Activated T-helper 1 cell treated with anti-CD3 and anti-CD28 coated beads, Interleukin-12 subunit alpha, Interleukin-12 subunit beta, Interleukin-2, Interleukin-4 antibody, amounts not matched to agents 30 ng/mL and 10 ng/mL and 1 ng/mL, durations not matched to agents 14 hours and 24 hours and 36 hours (primary cell): ENCODE measurements at regions of chr22 and their contacts with region 1.

Region 1: GRCh38 chr22:30423982-30424963 is 1.3 kb upstream of the MTFP1 start:
- DNase-seq: peak; percentile 98
- H3K4me3 Mint-ChIP-seq: peak overlapping the region; percentile 98
- H3K27ac Mint-ChIP-seq: peak overlapping the region; percentile 99
- H3K4me1 Mint-ChIP-seq: peaks cover 66% of the 10 kb centered on the region
- H3K27me3 Mint-ChIP-seq: no peaks in the 10 kb centered on the region

Region 2: DNA sequence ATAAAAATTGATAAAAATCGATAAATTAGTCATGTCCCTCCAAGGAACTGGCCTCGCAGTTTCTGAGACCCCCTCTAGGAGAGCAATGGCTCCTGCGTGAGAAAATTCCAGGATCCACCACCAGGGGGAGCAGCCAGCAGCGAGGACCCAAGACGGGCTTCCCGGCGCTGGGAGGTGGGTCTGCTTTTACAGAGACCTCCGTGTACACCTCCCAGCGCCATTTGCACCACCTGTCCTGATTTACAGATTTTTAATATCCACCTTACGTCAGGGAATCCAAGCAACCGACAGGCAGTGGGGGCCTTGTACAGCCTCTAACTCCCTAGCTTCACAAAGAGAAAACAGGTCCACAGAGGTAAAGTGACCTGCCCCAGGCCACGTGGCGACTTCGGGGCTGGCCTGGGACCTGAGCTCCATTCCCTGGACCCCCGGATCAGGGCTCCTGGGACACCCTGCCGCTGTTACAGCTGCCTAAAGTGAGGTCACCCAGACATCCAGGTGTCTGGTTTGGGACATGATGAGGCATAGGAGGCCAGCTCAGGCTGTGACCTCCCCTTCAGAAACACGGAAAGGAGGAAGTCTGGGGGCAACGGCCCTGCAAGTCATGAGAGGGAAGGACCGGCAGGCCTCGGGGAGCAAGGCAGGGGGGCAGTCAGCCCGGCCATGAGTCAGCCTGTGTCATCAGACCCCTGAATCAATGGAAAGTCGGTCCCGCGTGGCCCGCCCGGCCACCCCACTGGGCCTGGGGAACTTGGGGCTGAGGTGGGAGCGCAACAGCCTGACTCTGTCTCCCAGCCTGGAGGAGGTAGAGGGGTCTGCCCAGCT is 161.1 kb before region 1 on chr22:
- intact Hi-C with region 1: loop called (anchors 1 kb)
- DNase-seq: peak; percentile 67
- H3K4me3 Mint-ChIP-seq: peak overlapping the region; percentile 95
- H3K27ac Mint-ChIP-seq: peak overlapping the region; percentile 94
- H3K4me1 Mint-ChIP-seq: peaks cover 64% of the 10 kb centered on the region
- H3K27me3 Mint-ChIP-seq: no peaks in the 10 kb centered on the region

Region 3: GRCh38 chr22:30326706-30327362 is 97.4 kb before region 1 on chr22 and contains the start of gene TBC1D10A:
- intact Hi-C with region 1: loop called (anchors 2 kb)
- DNase-seq: peak; percentile 90
- H3K4me3 Mint-ChIP-seq: peak within 1 kb of the TSS; percentile 89
- H3K27ac Mint-ChIP-seq: peak within 1 kb of the TSS; percentile 60
- H3K4me1 Mint-ChIP-seq: peaks cover 48% of the 10 kb centered on the region
- H3K27me3 Mint-ChIP-seq: no peaks in the 10 kb centered on the region
- total RNA-seq, gene TBC1D10A: 17.3 and 24.9 TPM in 2 replicates

Region 4: GRCh38 chr22:30386960-30387827 is 37.1 kb before region 1 on chr22 and contains the start of gene RNF215:
- intact Hi-C with region 1: loop called (anchors 1 kb)
- DNase-seq: peak; percentile 79
- H3K4me3 Mint-ChIP-seq: peak within 1 kb of the TSS; percentile 84
- H3K27ac Mint-ChIP-seq: peak within 1 kb of the TSS; percentile 56
- H3K4me1 Mint-ChIP-seq: peaks cover 25% of the 10 kb centered on the region
- H3K27me3 Mint-ChIP-seq: no peaks in the 10 kb centered on the region
- total RNA-seq, gene RNF215: 10.3 and 13.2 TPM in 2 replicates

Region 5: DNA sequence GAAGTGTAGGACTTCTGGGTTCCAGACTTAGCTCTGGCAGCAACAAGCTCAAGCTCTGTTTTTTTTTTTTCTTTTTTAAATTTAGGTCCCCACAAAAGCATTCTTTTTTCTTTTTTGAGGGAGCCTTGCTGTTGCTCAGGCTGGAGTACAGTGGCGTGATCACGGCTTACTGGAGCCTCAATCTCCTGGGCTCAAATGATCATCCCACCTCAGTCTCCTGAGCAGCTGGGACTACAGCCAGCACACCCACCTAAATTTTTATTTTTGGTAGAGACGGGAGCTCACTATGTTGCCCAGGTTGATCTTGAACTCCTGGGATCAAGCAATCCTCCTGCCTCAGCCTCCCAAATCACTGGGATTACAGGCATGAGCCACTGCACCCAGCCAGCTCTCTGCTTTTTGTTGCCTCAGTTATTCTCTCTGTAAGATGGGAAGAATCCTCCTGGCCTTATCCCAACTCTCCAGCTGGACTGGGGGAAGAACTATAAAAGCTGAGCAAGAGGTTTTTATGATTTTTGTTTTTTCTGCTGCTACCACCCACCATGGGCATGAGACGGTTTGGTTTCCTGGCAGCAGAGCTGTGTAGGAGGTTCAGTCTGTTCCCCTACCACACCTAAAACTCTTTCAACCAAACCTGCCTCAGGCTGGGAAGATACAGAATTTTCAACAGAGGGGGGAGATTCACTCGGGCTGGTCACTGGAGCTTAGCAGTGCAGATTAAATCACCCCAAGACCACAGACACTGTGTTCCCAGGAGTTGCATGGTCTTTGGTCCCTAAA is 10.3 kb before region 1 on chr22:
- intact Hi-C with region 1: loop called (anchors 1 kb)
- DNase-seq: no peak
- H3K4me3 Mint-ChIP-seq: peak overlapping the region; percentile 24
- H3K27ac Mint-ChIP-seq: peak overlapping the region; percentile 82
- H3K4me1 Mint-ChIP-seq: peaks cover 49% of the 10 kb centered on the region
- H3K27me3 Mint-ChIP-seq: no peaks in the 10 kb centered on the region

Region 6: GRCh38 chr22:30444632-30445437 is 20.6 kb after region 1 on chr22:
- intact Hi-C with region 1: loop called (anchors 1 kb)
- DNase-seq: peak; percentile 46
- H3K4me3 Mint-ChIP-seq: no peak overlapping the region
- H3K27ac Mint-ChIP-seq: no peak overlapping the region
- H3K4me1 Mint-ChIP-seq: peaks cover 29% of the 10 kb centered on the region
- H3K27me3 Mint-ChIP-seq: peaks cover 27% of the 10 kb centered on the region

Region 7: GRCh38 chr22:30606455-30607299 is 182.4 kb after region 1 on chr22 and contains the start of gene TCN2:
- intact Hi-C with region 1: no loop called
- DNase-seq: peak; percentile 19
- H3K4me3 Mint-ChIP-seq: peak within 1 kb of the TSS; percentile 82
- H3K27ac Mint-ChIP-seq: peak within 1 kb of the TSS; percentile 47
- H3K4me1 Mint-ChIP-seq: peaks cover 65% of the 10 kb centered on the region
- H3K27me3 Mint-ChIP-seq: no peaks in the 10 kb centered on the region
- total RNA-seq, gene TCN2: 0.23 and 0.34 TPM in 2 replicates

Region 8: DNA sequence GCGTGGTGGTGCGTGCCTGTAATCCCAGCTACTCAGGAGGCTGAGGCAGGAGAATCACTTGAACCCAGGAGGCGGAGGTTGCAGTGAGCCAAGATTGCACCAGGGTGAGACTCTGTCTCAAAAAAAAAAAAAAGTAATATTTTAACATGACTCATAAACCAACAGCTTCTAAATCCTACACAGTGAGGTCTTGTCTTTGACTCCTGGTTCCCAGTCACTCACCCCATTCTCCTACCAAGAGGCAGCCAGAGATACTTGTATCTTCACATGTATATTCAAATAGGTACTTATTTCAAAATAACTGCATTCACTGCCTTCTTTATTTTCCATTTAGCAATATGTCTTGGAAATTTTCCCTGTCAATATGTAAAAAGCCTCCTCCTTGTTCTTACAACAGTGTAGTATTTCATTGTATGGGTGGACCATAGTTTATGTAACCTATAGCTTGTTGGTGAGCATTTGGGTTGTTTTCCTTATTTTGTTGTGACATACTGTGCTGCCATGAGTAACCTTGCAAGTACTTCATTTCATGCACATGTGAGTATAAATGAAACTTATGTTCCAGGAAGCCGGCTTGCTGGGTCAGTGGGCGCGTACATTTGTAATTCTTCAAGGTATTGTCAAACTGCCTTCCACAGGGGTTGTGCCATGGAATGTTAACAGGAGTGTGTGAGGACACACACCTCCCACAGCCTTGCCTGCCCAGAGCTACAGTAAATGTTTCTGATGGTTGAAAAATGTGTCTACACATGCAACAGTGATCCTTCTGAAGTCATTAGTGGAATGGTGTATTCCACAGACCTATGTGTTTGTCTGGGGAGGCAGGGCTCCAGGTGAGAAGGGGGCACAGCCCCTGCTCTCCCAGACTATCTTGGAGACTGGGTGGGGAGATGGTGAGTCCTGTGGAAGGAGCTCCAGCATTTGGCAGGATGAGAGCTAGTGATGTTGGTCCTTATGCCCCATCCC is 318.3 kb after region 1 on chr22:
- intact Hi-C with region 1: loop called (anchors 5 kb)
- DNase-seq: no peak
- H3K4me3 Mint-ChIP-seq: peak overlapping the region; percentile 48
- H3K27ac Mint-ChIP-seq: peak overlapping the region; percentile 96
- H3K4me1 Mint-ChIP-seq: peaks cover 81% of the 10 kb centered on the region
- H3K27me3 Mint-ChIP-seq: no peaks in the 10 kb centered on the region